ENCODE measurements at regions of chr1 and their contacts with region 1.

Region 1: GRCh38 chr1:35882945-35883634 is at the start of gene AGO1:
- DNase-seq: peak; percentile 47
- ATAC-seq: peak; percentile 95
- H3K4me3 ChIP-seq: peak within 1 kb of the TSS; percentile 93 to 96
- H3K27ac ChIP-seq: peak within 1 kb of the TSS; percentile 73
- H3K4me1 ChIP-seq: peaks cover 17% of the 10 kb centered on the region
- H3K27me3 ChIP-seq: no peaks in the 10 kb centered on the region
- CTCF ChIP-seq: peak; percentile 99
- total RNA-seq, gene AGO1: 40.1 TPM

Region 2: GRCh38 chr1:36303650-36304351 is 420.7 kb after region 1 on chr1:
- CTCF ChIA-PET with region 1: no interaction called
- POLR2A ChIA-PET with region 1: interaction called, 10 read pairs
- in situ Hi-C with region 1: no loop called
- intact Hi-C with region 1: no loop called
- DNase-seq: no peak
- ATAC-seq: no peak
- H3K4me3 ChIP-seq: no peak overlapping the region
- H3K27ac ChIP-seq: no peak overlapping the region
- H3K4me1 ChIP-seq: peaks cover 21% of the 10 kb centered on the region
- H3K27me3 ChIP-seq: no peaks in the 10 kb centered on the region
- CTCF ChIP-seq: no peak